ENCODE measurements at regions of chr18 and their contacts with region 1.

Region 1: DNA sequence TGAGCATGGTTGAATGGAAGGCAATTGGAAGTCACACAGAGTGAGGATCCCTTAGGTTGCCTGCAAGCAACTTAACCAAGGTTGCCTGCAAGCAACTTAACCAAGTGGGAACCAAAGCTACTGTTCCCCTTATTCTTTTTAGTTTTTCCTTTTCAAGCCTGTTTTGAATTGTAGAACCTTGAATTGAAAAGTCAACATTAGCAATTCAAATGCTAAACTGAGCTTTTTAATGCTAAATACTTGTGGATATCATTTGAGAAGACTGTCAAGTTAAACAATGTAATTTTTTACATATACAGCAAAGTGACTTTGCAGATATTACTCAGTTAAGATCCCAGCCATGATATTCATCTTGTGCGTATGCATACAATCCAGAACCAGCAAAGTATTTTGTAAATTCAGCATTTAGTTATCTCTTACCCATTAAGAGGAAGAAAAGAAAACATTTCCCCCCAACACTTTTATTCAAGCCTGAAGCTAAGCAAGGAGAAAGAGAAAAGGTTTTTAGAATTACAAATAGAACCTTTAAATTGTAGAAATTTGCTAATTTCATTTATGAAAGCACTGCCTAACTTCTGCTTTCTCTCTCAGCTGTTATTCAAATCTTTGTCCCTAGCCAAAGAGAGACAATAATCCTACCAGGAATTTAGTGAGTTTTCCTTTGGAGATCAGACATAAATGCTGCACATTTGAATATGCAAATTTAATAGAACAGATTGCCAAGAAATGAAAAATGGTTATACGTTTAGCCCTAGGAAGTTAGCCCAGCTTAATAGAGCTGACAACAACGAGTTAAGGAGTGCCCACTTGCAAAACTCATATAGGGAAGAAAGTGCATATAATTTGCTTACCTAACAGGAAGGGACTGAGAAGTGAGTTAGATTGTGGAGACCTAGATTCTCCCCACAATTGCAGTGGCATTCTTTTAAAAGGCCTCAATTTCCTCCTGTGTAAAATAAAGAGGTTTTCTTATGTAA is 643.2 kb upstream of the PIK3C3 start:
- DNase-seq: no peak
- ATAC-seq: no peak
- H3K4me3 ChIP-seq: no peak overlapping the region
- H3K27ac ChIP-seq: no peak overlapping the region
- H3K4me1 ChIP-seq: no peaks in the 10 kb centered on the region
- H3K27me3 ChIP-seq: no peaks in the 10 kb centered on the region
- CTCF ChIP-seq: no peak

Region 2: DNA sequence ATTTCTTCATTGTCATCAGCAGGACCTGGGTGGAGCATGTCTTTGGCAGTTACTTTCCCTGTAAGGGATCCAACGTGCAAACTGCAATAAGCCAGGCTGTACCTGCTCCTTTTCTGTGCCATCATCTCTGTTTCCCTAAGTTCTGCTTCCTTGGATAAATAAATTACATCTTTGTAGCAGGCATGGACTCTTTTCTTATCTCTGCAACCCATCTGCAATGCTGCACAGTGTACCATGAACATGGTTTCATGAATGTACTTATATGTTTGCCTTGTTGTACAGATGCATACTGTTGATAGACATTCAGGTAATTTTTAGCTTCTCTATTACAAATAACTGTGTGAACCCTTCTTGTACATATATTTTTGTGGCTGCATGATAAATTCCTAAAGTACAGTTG is 26.5 kb after region 1 on chr18:
- intact Hi-C with region 1: no loop called
- DNase-seq: no peak
- ATAC-seq: no peak
- H3K4me3 ChIP-seq: no peak overlapping the region
- H3K27ac ChIP-seq: no peak overlapping the region
- H3K4me1 ChIP-seq: no peaks in the 10 kb centered on the region
- H3K27me3 ChIP-seq: no peaks in the 10 kb centered on the region
- CTCF ChIP-seq: no peak

Region 3: DNA sequence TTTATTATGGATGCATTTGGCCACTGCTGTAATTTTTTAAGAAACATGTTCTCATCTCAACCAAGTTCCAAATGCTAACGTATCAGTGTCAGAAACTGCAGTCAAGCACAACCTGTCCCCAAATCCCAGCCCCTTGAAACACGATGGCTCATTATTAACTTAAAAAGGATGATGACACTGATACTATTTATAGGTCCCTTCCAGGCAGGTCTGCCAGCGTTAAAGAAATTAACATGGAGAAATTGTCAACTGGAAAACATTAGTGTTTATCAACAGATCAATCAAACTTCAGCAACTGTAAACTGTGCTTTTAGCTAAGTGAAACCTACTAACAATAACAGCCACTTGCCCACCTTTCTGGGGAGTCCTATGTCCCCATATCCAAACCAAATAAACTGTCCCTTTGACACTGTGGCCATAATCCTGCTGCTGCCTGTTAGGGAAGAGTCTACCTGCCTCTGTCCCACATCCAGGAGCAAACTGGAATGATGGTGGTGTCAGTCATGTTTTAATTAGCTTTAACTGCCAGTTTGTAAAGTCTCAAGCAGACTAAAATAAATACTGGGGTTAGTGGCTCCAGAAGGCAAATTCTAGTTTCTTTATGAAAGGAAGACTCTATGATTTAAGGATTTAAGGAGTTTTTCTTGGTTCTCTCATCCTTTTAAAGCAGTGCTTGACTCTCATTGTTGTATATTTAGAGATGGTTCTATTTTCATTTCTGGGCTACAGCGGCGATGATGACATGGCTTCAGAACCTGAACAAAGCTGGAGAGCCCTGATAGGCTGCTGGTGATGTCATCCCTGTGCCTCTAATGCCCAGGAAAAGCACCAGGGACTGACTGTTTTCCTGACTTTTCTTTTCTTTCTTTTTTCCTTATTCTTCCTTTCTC is 59.5 kb after region 1 on chr18:
- intact Hi-C with region 1: loop called in 1 of 10 experiments (anchors 10 kb)
- DNase-seq: peak in 1 of 2 donors; percentile 6
- ATAC-seq: peak in 5 of 8 donors; percentile 52 to 94 (median 67)
- H3K4me3 ChIP-seq: no peak overlapping the region
- H3K27ac ChIP-seq: peak overlapping the region in 3 of 10 donors; percentile 29 to 62 (median 55)
- H3K4me1 ChIP-seq: peaks cover 0 to 5% (median 0%) of the 10 kb centered on the region in 9 donors
- H3K27me3 ChIP-seq: no peaks in the 10 kb centered on the region
- CTCF ChIP-seq: no peak

Measured in heart right ventricle (tissue), 16 donors.